Left ventricle myocardium superior (tissue), 1 donor: ENCODE measurements at regions of chr14 and their contacts with region 1.

Region 1: DNA sequence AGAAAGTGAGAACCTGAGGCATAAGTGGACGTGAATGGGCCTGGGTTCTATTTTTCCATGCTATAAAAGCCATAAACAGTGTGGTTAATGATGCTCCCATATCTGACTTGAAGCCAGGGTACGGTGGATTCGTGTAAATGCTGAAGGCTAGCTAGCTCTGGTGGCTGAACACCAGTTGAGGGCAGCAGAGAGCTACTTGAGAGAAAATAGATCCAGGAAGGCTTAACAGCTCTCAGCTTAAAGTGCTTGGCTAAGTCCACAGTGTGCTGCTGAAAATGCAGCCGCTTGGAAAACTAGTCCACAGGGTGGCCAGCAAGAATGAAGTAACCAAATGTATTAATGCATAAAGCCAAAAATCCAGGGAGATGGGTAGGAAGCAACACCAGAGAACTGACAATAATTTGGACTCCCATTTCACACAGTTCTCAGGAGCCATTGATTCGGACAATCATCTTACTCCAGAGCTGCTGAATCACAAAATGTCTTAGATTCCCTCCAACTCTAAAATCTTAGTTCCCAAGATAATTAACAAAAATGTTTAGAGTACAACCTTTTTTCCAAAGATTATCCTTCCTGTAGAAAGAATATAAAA is 15.0 kb upstream of the FOXG1 start:
- DNase-seq: no peak
- ATAC-seq: no peak

Region 2: DNA sequence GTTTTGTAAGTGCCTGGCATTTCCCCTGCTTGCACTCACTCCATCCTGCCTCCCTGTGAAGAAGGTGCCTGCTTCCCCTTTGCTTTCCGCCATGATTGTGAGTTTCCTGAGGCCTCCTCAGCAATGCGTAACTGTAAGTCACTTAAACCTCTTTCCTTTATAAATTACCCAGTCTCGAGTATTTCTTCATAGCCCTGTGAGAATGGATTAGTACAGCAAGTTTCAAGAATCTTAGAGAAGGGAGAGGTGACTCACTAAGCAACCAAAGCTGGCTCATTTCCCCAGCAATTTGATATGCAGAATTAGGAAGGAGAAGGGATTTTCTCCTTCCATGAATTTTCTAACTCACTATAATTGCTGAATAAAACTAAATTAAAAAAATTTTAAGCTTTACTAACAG is 236.0 kb before region 1 on chr14:
- intact Hi-C with region 1: no loop called
- DNase-seq: no peak
- ATAC-seq: no peak

Region 3: GRCh38 chr14:30214461-30215090 is 1463.0 kb after region 1 on chr14:
- intact Hi-C with region 1: loop called (anchors 5 kb)
- DNase-seq: no peak
- ATAC-seq: peak; percentile 31